ENCODE measurements at regions of chr3 and their contacts with region 1.

Region 1: GRCh38 chr3:12556671-12557472 is at the start of gene MKRN2:
- DNase-seq: peak; percentile 91
- ATAC-seq: peak; percentile 86
- H3K4me3 Mint-ChIP-seq: peak within 1 kb of the TSS; percentile 87
- H3K27ac Mint-ChIP-seq: peak within 1 kb of the TSS; percentile 92
- H3K4me1 Mint-ChIP-seq: peaks cover 51% of the 10 kb centered on the region
- H3K27me3 Mint-ChIP-seq: peaks cover 22% of the 10 kb centered on the region
- total RNA-seq, gene MKRN2: 21.5 to 24.9 TPM

Region 2: DNA sequence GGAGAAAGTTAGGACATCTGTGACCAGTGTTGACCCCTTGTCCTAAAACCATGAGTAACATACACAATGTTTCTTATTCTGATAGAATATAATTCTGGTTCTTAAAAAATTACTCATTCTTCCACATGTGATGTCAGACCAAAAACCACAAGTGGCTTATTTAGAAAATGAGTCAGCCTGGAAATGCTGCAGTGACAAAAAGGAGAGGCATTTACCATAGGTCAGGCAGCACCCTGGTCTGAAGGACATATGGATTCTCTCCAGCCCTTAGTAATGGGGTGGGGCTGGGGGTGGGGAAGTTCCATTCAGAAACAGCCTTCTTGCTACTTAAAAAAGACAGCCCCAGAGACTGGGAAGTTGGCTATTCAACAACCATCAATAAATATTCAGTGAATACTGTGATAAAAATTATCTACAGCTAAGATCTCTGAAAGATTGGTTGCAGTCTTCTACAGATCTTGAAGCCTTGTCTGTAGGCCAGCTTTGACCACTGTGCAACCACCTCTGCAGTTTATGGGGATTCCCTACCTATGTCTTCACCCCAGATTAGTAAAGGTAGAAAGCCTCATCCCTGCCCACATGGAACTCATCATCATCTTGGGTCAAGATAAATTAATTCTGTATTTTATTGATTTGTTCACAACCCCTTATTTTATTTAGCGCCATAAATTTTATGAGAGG is 363.2 kb before region 1 on chr3:
- CTCF ChIA-PET with region 1: no interaction called
- POLR2A ChIA-PET with region 1: no interaction called
- intact Hi-C with region 1: loop called in 1 of 2 experiments (anchors 5 kb)
- DNase-seq: peak; percentile 63
- ATAC-seq: peak; percentile 60
- H3K4me3 Mint-ChIP-seq: peak overlapping the region; percentile 32
- H3K27ac Mint-ChIP-seq: peak overlapping the region; percentile 87
- H3K4me1 Mint-ChIP-seq: peaks cover 62% of the 10 kb centered on the region
- H3K27me3 Mint-ChIP-seq: peaks cover 4% of the 10 kb centered on the region

Region 3: DNA sequence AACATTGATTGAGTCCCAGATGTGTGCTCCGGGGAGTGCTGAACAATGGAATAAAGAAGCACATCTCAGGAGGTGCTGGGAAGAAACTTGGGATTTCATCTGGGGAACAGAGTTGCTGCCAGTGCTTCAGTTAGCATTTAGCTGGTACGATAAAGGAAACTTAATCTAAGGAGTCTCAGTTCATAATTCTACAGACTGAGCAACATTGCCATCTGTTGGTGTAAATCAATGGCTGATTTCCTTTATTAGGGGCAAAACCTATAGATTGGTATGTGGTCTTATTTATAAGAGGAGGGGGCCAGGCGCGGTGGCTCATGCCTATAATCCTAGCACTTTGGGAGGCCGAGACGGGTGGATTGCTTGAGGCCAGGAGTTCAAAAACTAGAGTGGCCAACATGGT is 20.4 kb before region 1 on chr3:
- CTCF ChIA-PET with region 1: no interaction called
- POLR2A ChIA-PET with region 1: no interaction called
- intact Hi-C with region 1: no loop called
- DNase-seq: no peak
- ATAC-seq: no peak
- H3K4me3 Mint-ChIP-seq: no peak overlapping the region
- H3K27ac Mint-ChIP-seq: no peak overlapping the region
- H3K4me1 Mint-ChIP-seq: peaks cover 4% of the 10 kb centered on the region
- H3K27me3 Mint-ChIP-seq: no peaks in the 10 kb centered on the region

Region 4: DNA sequence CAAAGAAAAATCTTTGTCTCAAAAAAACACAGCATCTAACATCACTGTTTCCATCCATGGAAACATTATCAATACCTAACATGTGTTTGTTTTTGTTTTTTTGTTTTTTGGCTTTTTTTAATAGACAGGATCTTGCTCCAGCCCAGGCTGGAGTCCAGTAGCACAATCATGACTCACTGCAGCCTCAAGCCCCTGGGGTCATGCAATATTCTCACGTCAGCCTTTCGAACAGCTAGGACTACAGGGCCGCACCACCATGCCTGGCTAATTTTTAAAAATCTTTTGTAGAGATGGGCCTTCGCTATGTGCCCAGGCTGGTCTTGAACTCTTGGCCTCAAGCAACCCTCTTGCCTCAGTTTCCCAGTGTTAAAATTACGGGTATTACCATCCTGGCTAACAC is 54.2 kb after region 1 on chr3:
- CTCF ChIA-PET with region 1: no interaction called
- POLR2A ChIA-PET with region 1: interaction called, 3 read pairs
- intact Hi-C with region 1: loop called (anchors 2 to 5 kb)
- DNase-seq: no peak
- ATAC-seq: no peak
- H3K4me3 Mint-ChIP-seq: no peak overlapping the region
- H3K27ac Mint-ChIP-seq: no peak overlapping the region
- H3K4me1 Mint-ChIP-seq: peaks cover 62% of the 10 kb centered on the region
- H3K27me3 Mint-ChIP-seq: no peaks in the 10 kb centered on the region

Region 5: GRCh38 chr3:12810013-12810780 is 253.3 kb after region 1 on chr3:
- CTCF ChIA-PET with region 1: interaction called, 3 read pairs
- POLR2A ChIA-PET with region 1: no interaction called
- intact Hi-C with region 1: loop called in 1 of 2 experiments (anchors 1 kb)
- DNase-seq: peak; percentile 96
- ATAC-seq: peak; percentile 100
- H3K4me3 Mint-ChIP-seq: peak overlapping the region; percentile 50
- H3K27ac Mint-ChIP-seq: no peak overlapping the region
- H3K4me1 Mint-ChIP-seq: peaks cover 6% of the 10 kb centered on the region
- H3K27me3 Mint-ChIP-seq: no peaks in the 10 kb centered on the region

Region 6: DNA sequence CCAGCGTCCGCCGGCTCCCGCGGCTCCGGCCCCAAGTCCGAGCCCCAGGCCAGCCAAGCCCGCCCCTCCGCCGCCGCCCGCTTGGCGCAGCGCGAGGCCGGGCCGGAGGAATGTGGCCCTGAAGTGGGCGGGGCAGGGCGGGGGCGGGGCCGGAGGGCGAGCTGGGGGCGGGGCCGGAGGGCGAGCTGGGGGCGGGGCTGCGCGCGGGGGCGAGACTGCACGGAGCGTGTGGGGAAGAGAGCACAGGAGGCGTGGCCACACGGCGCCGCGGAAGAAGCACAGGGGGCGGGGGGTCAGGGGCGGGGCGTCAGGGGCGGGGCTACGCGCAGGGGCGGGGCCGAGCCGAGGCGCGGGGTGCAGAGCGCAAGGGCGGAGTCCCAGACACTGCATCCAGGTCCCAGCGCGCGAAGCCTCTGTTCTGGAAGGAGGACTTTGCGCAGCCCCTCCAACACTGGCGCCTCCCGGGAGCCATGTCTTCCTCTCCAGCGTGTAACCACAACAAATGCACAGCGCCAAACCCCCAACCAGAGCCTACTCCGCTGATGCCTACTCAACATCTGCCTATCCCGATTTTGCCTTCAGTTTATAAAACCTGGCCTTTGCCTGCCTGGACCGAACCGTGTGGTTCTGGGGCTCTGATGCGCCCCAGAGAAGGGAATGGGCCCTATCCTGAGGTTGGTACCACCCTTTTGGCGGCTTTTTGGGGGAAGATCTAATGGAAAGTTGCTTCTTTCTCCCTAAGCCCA is 410.9 kb after region 1 on chr3:
- CTCF ChIA-PET with region 1: no interaction called
- POLR2A ChIA-PET with region 1: no interaction called
- intact Hi-C with region 1: loop called in 1 of 2 experiments (anchors 10 kb)
- DNase-seq: peak; percentile 95
- ATAC-seq: peak; percentile 86
- H3K4me3 Mint-ChIP-seq: peak overlapping the region; percentile 66
- H3K27ac Mint-ChIP-seq: peak overlapping the region; percentile 52
- H3K4me1 Mint-ChIP-seq: peaks cover 59% of the 10 kb centered on the region
- H3K27me3 Mint-ChIP-seq: no peaks in the 10 kb centered on the region

Region 7: DNA sequence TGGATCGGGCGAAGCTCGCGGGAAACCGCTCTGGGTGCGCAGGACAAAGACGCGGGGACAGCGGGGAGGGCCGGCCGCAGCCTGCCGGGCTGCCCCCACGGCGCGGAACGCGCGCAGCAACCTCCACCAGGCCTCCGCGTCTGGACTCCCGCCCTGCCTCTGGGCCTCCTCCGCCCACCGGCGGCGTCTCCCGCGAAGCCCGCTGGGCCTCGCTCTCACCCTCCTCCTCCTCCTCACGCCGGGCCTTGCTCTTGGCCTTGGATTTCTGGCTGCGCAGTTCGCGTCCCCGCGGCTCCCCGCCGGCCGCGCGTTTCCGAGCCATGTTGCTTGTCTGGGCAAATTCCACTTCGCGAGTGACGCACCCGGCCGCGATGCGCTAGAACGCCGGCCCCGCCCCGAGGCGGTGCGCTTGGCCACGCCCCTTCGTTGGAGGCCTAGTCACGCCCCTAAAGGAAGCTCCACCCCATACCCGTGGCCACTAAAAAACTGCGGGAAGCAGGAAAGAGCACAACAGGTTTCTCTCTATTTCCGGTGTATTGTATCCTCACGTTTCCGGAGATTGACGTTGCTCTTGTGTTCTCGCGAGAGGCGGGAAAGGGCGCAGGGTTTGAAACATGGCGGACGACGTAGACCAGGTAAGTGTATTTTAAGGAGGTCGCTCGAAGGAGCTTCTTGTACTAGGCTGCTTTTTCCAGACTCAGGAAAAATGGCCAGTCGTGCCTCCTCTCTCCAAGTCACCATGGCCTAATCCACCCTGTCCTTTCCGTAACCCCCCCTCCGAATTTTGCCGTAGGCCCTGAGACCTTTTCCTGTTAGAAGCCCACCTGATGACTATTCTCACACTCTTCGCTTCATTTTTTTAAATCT is 1621.6 kb after region 1 on chr3 and contains the starts of genes LSM3 and XPC:
- CTCF ChIA-PET with region 1: no interaction called
- POLR2A ChIA-PET with region 1: no interaction called
- intact Hi-C with region 1: loop called in 1 of 2 experiments (anchors 5 kb)
- DNase-seq: peak; percentile 98
- ATAC-seq: peak; percentile 93
- H3K4me3 Mint-ChIP-seq: peak within 1 kb of the TSS; percentile 79
- H3K27ac Mint-ChIP-seq: peak within 1 kb of the TSS; percentile 94
- H3K4me1 Mint-ChIP-seq: peaks cover 64% of the 10 kb centered on the region
- H3K27me3 Mint-ChIP-seq: no peaks in the 10 kb centered on the region
- total RNA-seq, gene LSM3: 23.0 to 30.2 TPM
- total RNA-seq, gene XPC: 24.3 to 24.7 TPM

Measured in activated CD4-positive, alpha-beta T cell treated with anti-CD3 and anti-CD28 coated beads for 36 hours (primary cell).